MCF 10A (cell line): ENCODE measurements at regions of chr10 and their contacts with region 1.

Region 1: DNA sequence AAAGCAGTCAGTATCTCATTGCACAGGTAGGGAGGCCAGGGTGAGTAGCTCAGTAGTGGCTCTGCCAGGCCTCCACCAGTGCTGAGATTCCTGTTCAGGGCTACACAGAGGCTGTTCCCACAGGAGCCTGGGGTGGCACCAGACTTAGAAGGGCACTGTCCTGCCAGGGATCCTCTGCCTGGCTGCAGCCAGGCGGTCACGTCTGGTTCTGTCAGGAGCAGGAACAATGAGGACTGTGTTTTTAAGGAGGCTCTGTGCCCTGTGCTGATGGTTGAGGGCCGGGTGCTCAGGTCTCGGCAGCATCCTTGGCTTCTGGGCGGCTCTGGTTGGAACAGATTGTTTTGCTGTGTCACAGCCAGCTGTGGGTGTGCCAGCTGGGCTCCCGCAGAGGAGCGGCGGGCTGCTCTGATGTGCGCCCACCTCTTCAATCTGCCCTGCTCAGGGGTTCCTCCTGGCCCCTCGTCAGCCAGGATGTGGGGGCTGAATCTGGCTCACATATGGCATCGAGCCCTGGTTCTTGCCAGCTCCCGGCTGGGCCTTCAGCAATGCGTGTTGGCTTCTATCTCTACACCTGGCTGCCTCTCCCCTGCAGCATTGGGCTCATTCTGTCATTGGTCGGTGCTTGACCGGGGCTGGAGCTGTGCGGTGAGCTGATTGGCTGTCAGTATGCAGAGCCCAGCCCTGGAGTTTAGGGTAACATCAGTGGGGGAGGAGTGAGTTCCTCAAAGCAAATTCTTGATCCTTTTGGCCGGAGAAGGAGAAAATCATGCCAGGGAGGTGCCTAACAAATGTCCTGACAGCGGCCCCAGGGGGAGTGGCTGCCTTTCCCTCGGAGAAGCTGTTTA is 41.2 kb downstream of the TACR2 start:
- DNase-seq: peak; percentile 92
- H3K4me3 Mint-ChIP-seq: peak overlapping the region; percentile 38
- H3K27ac Mint-ChIP-seq: peak overlapping the region; percentile 83
- H3K4me1 Mint-ChIP-seq: peaks cover 45% of the 10 kb centered on the region
- H3K27me3 Mint-ChIP-seq: no peaks in the 10 kb centered on the region
- CTCF ChIP-seq: no peak

Region 2: DNA sequence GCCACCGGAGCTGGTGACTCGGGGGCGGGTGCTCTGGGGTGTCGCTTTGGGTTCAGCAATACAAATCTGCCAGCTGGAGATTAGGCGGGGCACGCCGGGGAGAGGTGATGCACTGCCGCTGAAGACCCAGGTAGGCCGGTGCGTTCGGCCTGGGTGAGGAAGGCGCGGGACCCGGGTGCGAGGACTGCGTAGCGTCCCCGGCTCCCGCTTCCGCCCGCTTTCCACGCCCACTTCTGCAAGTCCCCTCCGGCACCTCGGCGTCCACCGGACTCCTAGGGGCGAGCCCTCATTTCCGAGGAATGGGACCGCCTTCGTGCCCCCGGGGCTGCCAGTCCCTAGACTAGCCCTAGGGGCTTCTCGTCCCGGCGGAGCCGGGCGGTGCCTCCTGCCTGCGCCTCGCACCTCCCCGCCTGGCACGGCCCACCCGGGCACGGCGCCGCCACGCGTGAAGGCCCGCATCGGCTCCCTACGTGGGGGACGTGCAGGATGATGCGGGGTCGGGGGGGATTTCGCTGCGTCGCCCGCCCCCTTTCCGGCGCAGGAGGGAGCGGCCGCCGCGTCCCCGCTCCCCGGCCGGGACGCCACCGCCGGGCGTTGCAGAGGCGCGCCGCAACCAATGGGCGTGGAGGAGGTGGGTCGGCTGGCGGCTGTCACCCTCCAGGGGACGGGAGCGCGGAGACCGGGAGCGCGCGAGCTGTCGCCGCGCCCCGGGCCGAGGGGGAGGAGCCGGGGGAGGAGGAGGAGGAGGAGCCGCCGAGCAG is 57.2 kb before region 1 on chr10:
- CTCF ChIA-PET with region 1: interaction called, 7 read pairs
- POLR2A ChIA-PET with region 1: interaction called, 48 read pairs
- intact Hi-C with region 1: no loop called
- DNase-seq: peak; percentile 88
- H3K4me3 Mint-ChIP-seq: peak overlapping the region; percentile 93
- H3K27ac Mint-ChIP-seq: peak overlapping the region; percentile 51
- H3K4me1 Mint-ChIP-seq: peaks cover 26% of the 10 kb centered on the region
- H3K27me3 Mint-ChIP-seq: no peaks in the 10 kb centered on the region
- CTCF ChIP-seq: no peak

Region 3: GRCh38 chr10:69337296-69338132 is 38.0 kb before region 1 on chr10:
- CTCF ChIA-PET with region 1: interaction called, 4 read pairs
- POLR2A ChIA-PET with region 1: interaction called, 74 read pairs
- intact Hi-C with region 1: loop called (anchors 5 kb)
- DNase-seq: peak; percentile 96
- H3K4me3 Mint-ChIP-seq: peak overlapping the region; percentile 60
- H3K27ac Mint-ChIP-seq: peak overlapping the region; percentile 78
- H3K4me1 Mint-ChIP-seq: peaks cover 70% of the 10 kb centered on the region
- H3K27me3 Mint-ChIP-seq: no peaks in the 10 kb centered on the region
- CTCF ChIP-seq: no peak

Region 4: DNA sequence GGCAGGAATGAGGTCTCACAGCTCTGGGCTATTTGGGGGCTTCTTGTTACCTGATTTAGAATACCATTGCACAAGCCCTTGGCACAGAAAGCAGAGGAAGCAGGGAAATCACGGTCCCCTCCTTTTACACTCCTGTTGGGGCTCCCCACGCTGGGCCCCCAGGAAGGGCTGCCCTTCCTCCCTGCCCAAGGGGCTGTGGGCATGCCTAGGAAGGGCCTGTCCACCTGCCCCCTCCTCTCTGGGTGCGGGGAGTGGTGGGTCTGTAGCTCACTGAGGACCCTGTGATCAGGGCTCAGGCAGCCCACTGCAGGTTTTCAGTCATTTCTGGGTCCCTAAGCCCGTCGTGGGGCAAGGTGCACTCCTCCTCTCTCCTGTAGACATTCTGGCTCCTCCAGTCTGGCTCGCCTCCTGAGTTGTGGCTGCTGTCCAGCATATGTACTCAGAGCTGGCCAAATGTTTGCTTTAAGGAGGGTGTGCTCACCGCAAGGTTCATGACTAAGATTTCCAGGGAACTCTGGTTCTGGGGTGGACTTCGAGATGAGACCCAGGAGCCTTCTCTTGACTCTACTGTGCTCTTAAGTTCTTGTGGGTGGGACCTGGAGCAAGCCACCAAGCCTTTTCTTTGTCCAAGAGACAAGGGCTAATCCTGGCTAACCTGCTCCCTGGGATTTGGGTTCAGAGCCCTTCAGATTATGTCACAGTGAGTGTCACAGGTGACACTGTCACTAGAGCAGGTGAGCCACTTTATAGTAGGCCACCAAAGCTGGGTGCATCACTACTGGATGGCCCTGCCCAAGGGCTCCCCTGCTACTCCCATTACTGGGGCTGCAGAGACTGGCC is 14.8 kb before region 1 on chr10:
- CTCF ChIA-PET with region 1: interaction called, 7 read pairs
- POLR2A ChIA-PET with region 1: interaction called, 84 read pairs
- intact Hi-C with region 1: no loop called
- DNase-seq: peak; percentile 96
- H3K4me3 Mint-ChIP-seq: peak overlapping the region; percentile 49
- H3K27ac Mint-ChIP-seq: peak overlapping the region; percentile 87
- H3K4me1 Mint-ChIP-seq: peaks cover 52% of the 10 kb centered on the region
- H3K27me3 Mint-ChIP-seq: no peaks in the 10 kb centered on the region
- CTCF ChIP-seq: no peak

Region 5: DNA sequence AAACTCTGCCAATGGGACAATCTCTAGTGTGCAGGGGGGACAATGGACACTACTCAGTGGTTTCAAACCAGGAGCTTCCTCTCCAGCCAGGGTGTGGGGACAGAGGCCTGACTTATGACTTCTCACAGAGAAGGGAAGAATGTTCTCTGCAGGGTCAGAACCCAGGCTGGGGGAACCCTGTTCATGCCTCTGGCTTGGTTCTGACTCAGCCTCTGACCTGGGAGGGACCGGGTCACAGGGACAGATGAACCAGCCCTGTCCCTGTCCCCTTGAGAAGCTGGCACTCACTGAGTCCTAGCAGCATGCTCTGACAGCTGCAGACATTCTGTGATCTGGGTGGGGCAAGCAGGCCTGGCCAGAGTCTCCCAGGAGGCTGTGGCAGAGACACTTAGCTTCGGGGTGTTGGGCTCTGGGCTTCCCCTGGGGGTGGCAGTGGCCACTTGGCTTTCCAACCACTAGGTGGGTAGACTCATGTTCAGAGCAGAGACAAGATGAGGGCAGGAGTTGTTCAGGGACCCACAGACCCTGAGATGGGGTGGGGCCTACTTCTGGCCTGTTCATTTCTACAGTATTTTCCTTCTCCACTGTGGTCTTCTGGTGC is 89.4 kb after region 1 on chr10:
- CTCF ChIA-PET with region 1: no interaction called
- POLR2A ChIA-PET with region 1: no interaction called
- intact Hi-C with region 1: no loop called
- DNase-seq: no peak
- H3K4me3 Mint-ChIP-seq: no peak overlapping the region
- H3K27ac Mint-ChIP-seq: no peak overlapping the region
- H3K4me1 Mint-ChIP-seq: no peaks in the 10 kb centered on the region
- H3K27me3 Mint-ChIP-seq: no peaks in the 10 kb centered on the region
- CTCF ChIP-seq: no peak